Activated CD4-positive, alpha-beta T cell treated with anti-CD3 and anti-CD28 coated beads for 36 hours (primary cell): ENCODE measurements at regions of chr12 and their contacts with region 1.

Region 1: GRCh38 chr12:96219698-96220206 is 25.6 kb downstream of the ELK3 start:
- DNase-seq: peak; percentile 39
- ATAC-seq: peak; percentile 28
- H3K4me3 Mint-ChIP-seq: no peak overlapping the region
- H3K27ac Mint-ChIP-seq: no peak overlapping the region
- H3K4me1 Mint-ChIP-seq: peaks cover 38% of the 10 kb centered on the region
- H3K27me3 Mint-ChIP-seq: no peaks in the 10 kb centered on the region

Region 2: GRCh38 chr12:95942524-95943329 is 277.0 kb before region 1 on chr12 and contains the start of gene CCDC38:
- CTCF ChIA-PET with region 1: no interaction called
- POLR2A ChIA-PET with region 1: no interaction called
- intact Hi-C with region 1: loop called in 1 of 2 experiments (anchors 10 kb)
- DNase-seq: peak; percentile 91
- ATAC-seq: peak; percentile 98
- H3K4me3 Mint-ChIP-seq: peak within 1 kb of the TSS; percentile 84
- H3K27ac Mint-ChIP-seq: peak within 1 kb of the TSS; percentile 91
- H3K4me1 Mint-ChIP-seq: peaks cover 4% of the 10 kb centered on the region
- H3K27me3 Mint-ChIP-seq: no peaks in the 10 kb centered on the region
- total RNA-seq, gene CCDC38: 0.21 TPM in 1 of 2 experiments, not detected in the other

Region 3: GRCh38 chr12:96047229-96048211 is 172.2 kb before region 1 on chr12:
- CTCF ChIA-PET with region 1: interaction called, 13 read pairs
- POLR2A ChIA-PET with region 1: no interaction called
- intact Hi-C with region 1: loop called in 1 of 2 experiments (anchors 5 kb)
- DNase-seq: peak; percentile 30
- ATAC-seq: peak; percentile 83
- H3K4me3 Mint-ChIP-seq: peak overlapping the region; percentile 20
- H3K27ac Mint-ChIP-seq: peak overlapping the region; percentile 92
- H3K4me1 Mint-ChIP-seq: peaks cover 58% of the 10 kb centered on the region
- H3K27me3 Mint-ChIP-seq: no peaks in the 10 kb centered on the region

Region 4: GRCh38 chr12:96132819-96133218 is 86.9 kb before region 1 on chr12:
- CTCF ChIA-PET with region 1: interaction called, 7 read pairs
- POLR2A ChIA-PET with region 1: no interaction called
- intact Hi-C with region 1: loop called in 1 of 2 experiments (anchors 2 kb)
- DNase-seq: peak; percentile 39
- ATAC-seq: no peak
- H3K4me3 Mint-ChIP-seq: no peak overlapping the region
- H3K27ac Mint-ChIP-seq: no peak overlapping the region
- H3K4me1 Mint-ChIP-seq: peaks cover 23% of the 10 kb centered on the region
- H3K27me3 Mint-ChIP-seq: peaks cover 6% of the 10 kb centered on the region

Region 5: GRCh38 chr12:96208801-96209549 is 10.8 kb before region 1 on chr12:
- CTCF ChIA-PET with region 1: interaction called, 14 read pairs
- POLR2A ChIA-PET with region 1: no interaction called
- intact Hi-C with region 1: no loop called
- DNase-seq: no peak
- ATAC-seq: no peak
- H3K4me3 Mint-ChIP-seq: peak overlapping the region; percentile 3
- H3K27ac Mint-ChIP-seq: peak overlapping the region; percentile 98
- H3K4me1 Mint-ChIP-seq: peaks cover 99% of the 10 kb centered on the region
- H3K27me3 Mint-ChIP-seq: no peaks in the 10 kb centered on the region